ENCODE measurements at regions of chr12 and their contacts with region 1.

Region 1: DNA sequence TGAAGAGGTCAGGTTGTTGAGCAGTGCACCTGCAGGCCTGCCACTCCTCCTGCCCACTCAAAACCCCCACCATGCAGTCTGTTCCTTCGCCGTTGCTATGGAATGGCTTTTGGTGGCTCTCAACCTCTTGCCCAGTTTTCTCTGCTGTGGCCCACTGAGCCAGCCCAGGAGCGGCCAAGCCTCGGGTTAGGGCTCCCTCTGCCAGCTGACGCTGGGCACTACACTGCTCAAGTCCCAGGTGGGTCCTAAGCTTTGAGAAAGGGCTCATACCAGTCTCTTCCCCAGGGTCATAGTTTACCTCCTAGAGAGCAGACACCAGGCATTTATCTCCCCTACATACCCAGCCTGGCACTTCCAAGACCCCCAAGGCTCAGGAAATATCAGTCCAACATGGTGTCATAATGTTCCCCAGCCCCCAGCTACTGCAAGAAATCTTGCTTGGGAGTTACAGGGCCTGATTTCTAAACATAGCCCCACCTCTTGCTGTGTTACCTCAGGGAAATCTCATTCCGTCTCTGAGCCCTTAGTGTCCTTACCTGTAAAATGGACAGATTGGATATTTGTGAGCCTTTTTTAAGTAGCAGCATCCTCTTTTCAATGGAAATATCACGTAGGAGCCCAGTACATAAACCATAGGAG is 59.4 kb downstream of the TSPAN11 start:
- DNase-seq: peak; percentile 17
- H3K4me3 ChIP-seq: no peak overlapping the region
- H3K27ac ChIP-seq: no peak overlapping the region
- H3K4me1 ChIP-seq: no peaks in the 10 kb centered on the region
- H3K27me3 ChIP-seq: no peaks in the 10 kb centered on the region
- CTCF ChIP-seq: peak; percentile 70 to 93

Region 2: DNA sequence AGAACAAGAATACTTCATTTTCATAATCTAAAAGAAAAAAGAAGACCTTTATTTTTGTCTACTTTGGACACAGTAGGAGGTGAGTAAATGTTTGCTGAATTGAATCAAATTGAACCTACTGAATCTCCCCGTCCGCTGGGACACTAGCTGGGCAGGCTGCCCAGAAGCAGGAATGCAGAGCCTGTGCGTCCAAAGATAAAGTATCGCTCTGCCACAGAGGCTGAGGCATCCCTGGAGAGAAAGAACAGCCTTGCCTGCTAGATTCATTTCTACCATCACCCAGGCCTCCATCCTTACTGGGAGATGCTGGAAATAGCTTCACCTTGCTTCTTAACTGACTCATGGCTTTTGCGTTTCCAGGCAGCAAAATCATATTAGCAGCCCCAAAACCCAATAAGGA is 123.4 kb before region 1 on chr12:
- CTCF ChIA-PET with region 1: no interaction called
- dilution Hi-C with region 1: loop called (anchors 10 kb)
- in situ Hi-C with region 1: loop called in 1 of 2 experiments (anchors 10 kb)
- intact Hi-C with region 1: no loop called
- DNase-seq: no peak
- H3K4me3 ChIP-seq: no peak overlapping the region
- H3K27ac ChIP-seq: no peak overlapping the region
- H3K4me1 ChIP-seq: no peaks in the 10 kb centered on the region
- H3K27me3 ChIP-seq: peaks cover 5% of the 10 kb centered on the region
- CTCF ChIP-seq: no peak

Region 3: DNA sequence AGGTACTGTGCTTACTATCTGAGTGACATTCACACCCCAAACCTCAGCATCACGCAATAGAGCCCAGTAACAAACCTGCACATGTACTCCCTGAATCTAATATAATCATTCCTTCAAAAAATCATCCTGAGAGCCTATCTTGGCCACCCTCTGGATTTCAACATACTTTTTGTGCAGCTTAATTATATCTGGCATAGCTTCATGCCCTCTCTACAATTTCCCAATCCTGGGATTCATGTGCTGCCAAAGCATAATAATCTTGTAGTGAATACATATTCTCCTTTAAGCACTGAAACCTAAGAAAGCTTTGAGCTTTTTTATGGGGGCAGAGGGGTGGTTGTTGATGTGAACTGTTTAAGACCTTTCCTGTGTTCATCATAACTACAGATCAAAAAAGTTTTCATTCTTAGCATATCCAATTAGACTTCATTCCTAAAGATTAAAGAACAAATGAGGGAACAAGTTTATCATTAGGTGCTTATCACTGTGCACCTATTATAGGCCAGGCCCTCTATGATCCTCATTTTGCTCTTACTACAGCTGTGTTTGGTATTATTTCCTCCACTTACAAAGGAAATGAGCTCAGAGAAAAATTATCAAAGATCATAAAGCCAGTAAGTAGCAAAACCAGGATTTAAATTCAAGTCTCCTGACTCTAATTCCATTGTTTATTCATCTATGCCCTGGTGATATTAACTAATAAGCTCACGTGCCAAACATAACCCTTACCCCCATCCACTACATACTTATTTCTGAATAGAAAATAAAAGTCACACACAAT is 288.8 kb after region 1 on chr12:
- CTCF ChIA-PET with region 1: no interaction called
- dilution Hi-C with region 1: loop called (anchors 5 kb)
- in situ Hi-C with region 1: no loop called
- intact Hi-C with region 1: no loop called
- DNase-seq: no peak
- H3K4me3 ChIP-seq: no peak overlapping the region
- H3K27ac ChIP-seq: no peak overlapping the region
- H3K4me1 ChIP-seq: no peaks in the 10 kb centered on the region
- H3K27me3 ChIP-seq: no peaks in the 10 kb centered on the region
- CTCF ChIP-seq: no peak